ENCODE measurements at regions of chr1 and their contacts with region 1.

Region 1: DNA sequence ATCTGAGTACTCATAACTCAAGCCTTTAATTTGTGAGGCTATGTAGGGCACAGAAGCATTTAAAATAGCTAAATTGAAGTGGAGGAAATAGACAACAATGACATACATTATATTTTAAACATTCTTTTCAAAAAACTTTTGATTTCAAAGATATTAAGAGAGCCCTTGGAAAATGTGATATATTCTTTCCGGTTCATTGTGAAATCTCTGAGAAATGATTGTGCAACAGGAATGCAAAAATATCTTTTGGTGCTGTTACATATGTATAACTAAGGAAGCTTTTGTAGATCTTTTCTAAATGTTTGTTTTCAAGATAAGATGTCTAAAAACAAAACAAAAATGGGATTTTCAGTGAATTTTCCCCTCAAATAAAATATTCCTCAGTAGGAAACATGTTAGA is 185.2 kb downstream of the LEPR start:
- DNase-seq: no peak
- ATAC-seq: no peak

Region 2: DNA sequence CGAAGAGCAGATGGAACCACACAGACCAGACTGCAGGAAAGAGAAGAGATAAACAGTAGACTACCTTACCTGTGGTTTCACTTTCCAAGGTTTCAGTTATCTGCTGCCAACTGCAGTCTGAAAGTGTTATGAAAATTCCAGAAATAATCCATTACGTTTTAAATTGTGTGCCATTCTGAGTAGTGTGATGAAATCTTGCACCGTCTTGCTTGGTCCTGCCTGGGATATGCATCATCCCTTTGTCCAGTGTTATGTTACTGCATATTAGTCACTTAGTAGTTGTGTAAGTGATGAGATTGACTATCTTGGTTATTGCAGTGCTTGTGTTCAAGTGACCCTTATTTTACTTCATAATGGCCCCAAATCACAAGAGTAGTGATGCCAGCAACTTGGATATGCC is 262.3 kb before region 1 on chr1:
- intact Hi-C with region 1: no loop called
- DNase-seq: no peak
- ATAC-seq: no peak

Region 3: DNA sequence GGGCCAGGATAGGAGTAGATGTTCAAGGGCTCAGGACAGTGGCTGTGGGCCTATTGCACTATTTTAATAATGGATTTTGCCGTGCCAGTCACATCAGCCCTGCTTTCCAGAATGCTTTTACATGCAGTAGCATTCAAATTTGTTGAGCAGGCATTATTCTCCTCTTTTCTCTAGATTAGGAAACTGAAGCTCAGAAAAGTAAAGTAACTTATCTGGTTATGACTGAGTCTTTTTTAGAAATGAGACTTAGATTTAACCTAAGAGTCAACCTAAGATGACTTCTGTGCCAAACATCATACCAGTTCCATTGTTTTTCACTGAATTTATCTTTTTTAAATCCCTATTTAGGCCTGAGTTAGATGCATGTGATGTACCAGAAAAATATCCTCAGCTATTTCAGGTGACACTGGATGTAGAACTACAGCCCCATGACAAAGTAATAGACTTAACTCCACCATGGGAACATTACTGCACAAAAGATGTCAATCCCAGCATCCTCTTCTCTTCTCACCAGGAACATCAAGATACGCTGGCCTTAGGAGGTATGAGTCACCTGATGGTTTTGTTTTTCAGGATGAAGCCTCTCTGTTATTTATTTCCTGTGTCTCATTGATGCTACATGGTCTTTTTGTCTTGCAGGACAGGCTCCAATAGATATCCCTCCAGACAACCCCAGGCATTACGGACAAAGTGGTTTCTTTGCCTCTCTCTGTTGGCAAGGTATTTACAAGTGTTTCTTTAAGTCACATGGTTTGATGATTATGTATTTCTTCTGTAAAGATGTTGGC is 216.5 kb before region 1 on chr1:
- intact Hi-C with region 1: loop called (anchors 5 kb)
- DNase-seq: no peak
- ATAC-seq: no peak